Pancreas (tissue), 10 donors: ENCODE measurements at regions of chr11 and their contacts with region 1.

Region 1: GRCh38 chr11:68436985-68437926 is 23.3 kb upstream of the PPP6R3 start:
- DNase-seq: peak in 1 of 6 donors; percentile 68
- ATAC-seq: peak; percentile 27 to 70 (median 52)
- H3K4me3 ChIP-seq: no peak overlapping the region
- H3K27ac ChIP-seq: no peak overlapping the region
- H3K4me1 ChIP-seq: no peaks in the 10 kb centered on the region
- H3K27me3 ChIP-seq: no peaks in the 10 kb centered on the region
- CTCF ChIP-seq: no peak

Region 2: DNA sequence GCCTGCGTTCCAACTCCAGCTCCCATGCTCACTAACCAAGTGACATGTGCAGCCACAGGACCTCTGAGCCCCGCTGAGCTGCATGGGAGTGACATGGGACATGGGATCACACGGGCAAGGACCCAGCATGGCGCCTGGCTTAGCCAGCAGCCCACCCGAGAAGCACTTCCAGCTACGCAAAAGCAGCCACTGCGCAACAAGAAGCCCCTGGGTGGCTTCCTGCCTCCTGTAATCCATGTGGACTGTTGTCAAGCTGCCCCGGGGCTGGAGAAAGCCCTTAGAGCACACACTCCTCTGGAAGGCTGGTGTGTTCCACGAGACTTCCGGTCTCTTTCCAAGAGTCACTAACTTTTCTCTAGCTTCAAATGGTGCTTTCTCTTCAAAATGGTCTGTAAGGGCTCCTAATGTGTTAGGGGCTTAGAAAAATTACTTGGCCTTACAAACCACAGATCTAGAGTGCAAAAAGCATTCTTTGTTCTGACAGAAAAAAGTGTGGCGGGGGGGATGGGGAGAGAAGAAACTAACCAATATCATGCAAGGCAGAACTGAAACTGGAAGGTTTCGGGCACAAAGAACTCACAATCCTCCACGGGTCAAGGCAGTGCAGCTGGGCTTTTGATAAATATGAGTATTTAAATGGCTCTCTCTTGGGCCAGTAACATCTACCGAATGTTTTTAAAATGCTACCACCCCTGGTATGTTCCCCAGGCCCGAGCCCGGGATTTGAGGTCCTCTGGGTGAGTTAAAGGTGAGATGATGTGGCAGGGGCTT is 170.9 kb before region 1 on chr11:
- intact Hi-C with region 1: loop called in 1 of 3 experiments (anchors 10 kb)
- DNase-seq: peak in 1 of 6 donors; percentile 38
- ATAC-seq: no peak
- H3K4me3 ChIP-seq: no peak overlapping the region
- H3K27ac ChIP-seq: no peak overlapping the region
- H3K4me1 ChIP-seq: peaks cover 8 to 20% (median 12%) of the 10 kb centered on the region in 3 donors
- H3K27me3 ChIP-seq: no peaks in the 10 kb centered on the region
- CTCF ChIP-seq: no peak

Region 3: DNA sequence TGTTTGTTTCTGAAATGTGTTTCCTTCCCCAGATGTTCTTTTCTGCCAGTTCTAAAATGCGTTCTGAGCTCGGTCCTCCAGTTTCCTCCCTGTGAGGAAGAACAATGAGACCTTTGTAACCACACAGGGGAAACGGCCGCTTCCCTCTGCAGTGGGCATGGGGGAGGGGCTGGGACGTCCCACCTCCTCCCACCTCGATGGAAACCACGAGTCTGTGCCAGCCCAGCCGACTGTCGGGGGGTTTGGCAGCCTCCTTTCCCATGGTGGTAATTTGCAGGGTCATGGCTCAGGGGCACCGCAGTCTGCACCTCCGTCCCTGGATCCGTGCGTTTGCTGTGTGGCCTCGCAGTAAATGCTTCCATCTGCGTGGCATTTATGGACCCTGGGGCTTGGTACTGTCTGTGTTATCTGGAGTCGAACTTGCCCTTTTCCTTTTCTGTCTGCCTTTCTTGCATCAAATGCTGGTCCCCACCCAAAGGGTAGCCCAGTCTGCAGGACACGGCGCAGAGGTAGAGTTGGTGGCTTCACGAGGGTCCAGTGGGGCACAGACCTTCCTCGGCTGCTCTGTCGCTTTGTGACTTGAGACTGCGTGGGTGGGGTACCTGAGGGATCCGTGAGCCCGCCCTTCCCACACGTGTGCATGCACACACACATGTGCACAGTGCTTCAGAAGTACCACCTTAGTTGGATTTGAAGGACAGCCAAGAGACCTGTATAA is 108.7 kb before region 1 on chr11:
- intact Hi-C with region 1: no loop called
- DNase-seq: peak in 3 of 6 donors; percentile 57 to 62 (median 60)
- ATAC-seq: peak; percentile 68 to 82 (median 74)
- H3K4me3 ChIP-seq: no peak overlapping the region
- H3K27ac ChIP-seq: peak overlapping the region; percentile 2 to 71 (median 50)
- H3K4me1 ChIP-seq: peaks cover 20 to 31% (median 25%) of the 10 kb centered on the region in 3 donors
- H3K27me3 ChIP-seq: no peaks in the 10 kb centered on the region
- CTCF ChIP-seq: no peak